ENCODE measurements at regions of chr3 and their contacts with region 1.

Region 1: GRCh38 chr3:58161435-58162398 is 49.1 kb downstream of the DNASE1L3 start:
- DNase-seq: peak; percentile 96
- H3K4me3 ChIP-seq: no peak overlapping the region
- H3K27ac ChIP-seq: peak overlapping the region; percentile 76
- H3K4me1 ChIP-seq: peaks cover 41% of the 10 kb centered on the region
- H3K27me3 ChIP-seq: no peaks in the 10 kb centered on the region
- CTCF ChIP-seq: no peak
- POLR2A ChIP-seq: peak; percentile 74

Region 2: GRCh38 chr3:58013973-58014649 is 147.6 kb before region 1 on chr3:
- CTCF ChIA-PET with region 1: no interaction called
- POLR2A ChIA-PET with region 1: no interaction called
- dilution Hi-C with region 1: no loop called
- intact Hi-C with region 1: loop called (anchors 5 kb)
- DNase-seq: peak; percentile 58
- H3K4me3 ChIP-seq: peak overlapping the region in 2 of 3 experiments; percentile 2 to 19
- H3K27ac ChIP-seq: peak overlapping the region; percentile 1
- H3K4me1 ChIP-seq: peaks cover 65% of the 10 kb centered on the region
- H3K27me3 ChIP-seq: no peaks in the 10 kb centered on the region
- CTCF ChIP-seq: no peak
- POLR2A ChIP-seq: no peak

Region 3: GRCh38 chr3:58332575-58333188 is 171.0 kb after region 1 on chr3 and contains the start of gene PXK:
- CTCF ChIA-PET with region 1: no interaction called
- POLR2A ChIA-PET with region 1: no interaction called
- dilution Hi-C with region 1: no loop called
- intact Hi-C with region 1: no loop called
- DNase-seq: peak; percentile 75
- H3K4me3 ChIP-seq: peak within 1 kb of the TSS; percentile 63 to 71 (median 63)
- H3K27ac ChIP-seq: peak within 1 kb of the TSS; percentile 41
- H3K4me1 ChIP-seq: peaks cover 12% of the 10 kb centered on the region
- H3K27me3 ChIP-seq: no peaks in the 10 kb centered on the region
- CTCF ChIP-seq: peak in 1 of 2 donors; percentile 32
- POLR2A ChIP-seq: no peak
- total RNA-seq, gene PXK: 11.1 and 14.6 TPM in 2 replicates